Activated CD4-positive, alpha-beta memory T cell treated with anti-CD3 and anti-CD28 coated beads, Interleukin-2, amount 10 ng/mL, durations not matched to agents 7 days and 5 days (primary cell): ENCODE measurements at regions of chr9 and their contacts with region 1.

Region 1: DNA sequence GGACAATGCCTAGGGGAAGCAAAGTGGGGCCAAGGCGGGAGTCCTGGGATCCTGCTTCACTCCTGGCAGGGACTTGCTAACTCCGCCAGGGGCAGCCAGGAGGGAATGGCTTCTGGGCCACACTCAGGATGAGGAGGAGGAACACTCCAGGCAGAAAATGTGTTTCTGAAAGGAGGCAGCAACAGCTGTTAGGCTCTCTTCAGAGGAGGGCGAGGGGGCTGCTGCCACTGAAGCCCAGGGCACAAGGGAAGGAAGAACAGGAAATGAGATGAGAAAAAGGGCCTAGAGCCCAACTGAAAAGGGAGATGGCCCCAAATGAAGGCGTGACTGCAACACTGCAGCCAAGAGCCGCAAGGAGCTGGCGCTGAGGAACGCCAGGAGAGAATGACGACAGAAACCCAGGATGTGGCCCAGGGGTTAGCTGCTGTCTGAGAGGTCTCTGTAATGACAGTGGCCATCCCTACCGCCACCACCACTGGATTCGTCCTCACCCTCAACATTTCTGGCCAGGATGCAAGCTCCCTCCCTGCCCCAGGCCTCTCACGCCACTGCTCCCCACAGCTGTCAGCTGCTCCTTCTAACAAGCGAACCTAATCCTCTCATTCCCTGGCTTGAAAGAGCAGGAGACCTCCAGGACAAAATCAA is 15.8 kb downstream of the PSMB7 start:
- DNase-seq: no peak
- H3K4me3 Mint-ChIP-seq: no peak overlapping the region
- H3K27ac Mint-ChIP-seq: no peak overlapping the region
- H3K4me1 Mint-ChIP-seq: peaks cover 16% of the 10 kb centered on the region
- H3K27me3 Mint-ChIP-seq: no peaks in the 10 kb centered on the region

Region 2: DNA sequence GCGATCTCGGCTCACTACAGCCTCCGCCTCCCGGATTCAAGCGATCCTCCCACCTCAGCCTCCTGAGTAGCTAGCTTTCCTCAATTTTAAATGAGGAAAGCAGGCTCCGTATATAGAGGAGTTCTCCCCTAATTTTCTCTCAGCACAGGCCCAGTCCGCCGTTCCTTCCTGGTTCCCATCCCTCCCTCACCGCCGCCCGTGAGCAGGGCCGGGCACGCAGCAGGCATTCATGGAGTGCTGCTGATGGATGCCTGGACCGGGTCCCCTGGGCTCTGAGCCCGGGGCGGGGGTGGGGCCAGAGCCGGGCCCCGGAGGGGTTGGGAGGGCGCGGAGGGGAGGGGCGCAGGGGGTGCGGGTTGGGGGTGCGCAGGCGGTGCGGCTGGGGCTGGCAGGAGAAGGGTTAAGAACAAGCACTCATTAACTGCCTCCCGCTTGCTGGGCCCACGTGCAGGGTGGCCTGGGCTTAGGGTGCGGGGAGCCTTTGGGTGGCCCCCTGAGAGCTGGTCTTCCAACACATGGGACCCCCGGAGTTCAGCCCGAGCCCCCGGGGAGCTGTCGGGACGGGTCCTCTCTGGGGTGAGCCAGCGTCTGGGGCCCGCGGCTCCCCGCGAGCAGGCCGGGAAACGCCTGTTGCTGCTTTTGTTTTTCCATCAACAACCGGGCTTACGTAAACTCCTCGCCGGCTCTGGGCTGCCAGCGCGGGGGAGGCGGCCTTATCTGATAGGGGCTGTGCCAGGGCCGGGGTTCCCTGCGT is 354.2 kb before region 1 on chr9:
- CTCF ChIA-PET with region 1: no interaction called
- POLR2A ChIA-PET with region 1: no interaction called
- DNase-seq: no peak
- H3K4me3 Mint-ChIP-seq: no peak overlapping the region
- H3K27ac Mint-ChIP-seq: no peak overlapping the region
- H3K4me1 Mint-ChIP-seq: peaks cover 8% of the 10 kb centered on the region
- H3K27me3 Mint-ChIP-seq: peaks cover 50% of the 10 kb centered on the region

Region 3: DNA sequence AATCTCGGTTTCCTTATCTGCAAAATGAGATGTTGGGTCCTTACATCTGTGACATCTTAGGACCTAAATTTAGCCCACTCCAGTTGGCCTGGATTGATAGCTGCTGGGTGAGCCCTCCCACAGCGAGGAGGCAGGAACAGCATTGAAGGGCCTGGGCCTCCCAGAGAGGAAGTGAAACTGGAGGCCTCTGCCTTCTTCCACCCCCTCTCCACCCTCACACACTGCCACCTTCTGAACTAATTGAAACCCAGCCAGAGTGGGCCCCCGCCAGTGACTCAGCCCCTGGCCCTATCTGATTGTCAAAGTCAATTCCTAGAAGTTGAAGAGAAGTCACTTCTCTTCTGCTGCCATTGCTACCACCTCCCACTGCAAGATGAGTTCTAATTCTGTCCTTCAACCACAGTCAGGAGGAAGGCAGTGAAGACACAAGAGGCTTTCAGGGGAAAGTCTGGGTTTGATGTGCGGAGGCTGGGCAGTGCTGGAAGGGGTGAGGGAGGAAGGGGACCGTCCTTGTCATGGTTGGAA is 196.9 kb before region 1 on chr9:
- CTCF ChIA-PET with region 1: no interaction called
- POLR2A ChIA-PET with region 1: no interaction called
- DNase-seq: peak; percentile 91
- H3K4me3 Mint-ChIP-seq: peak overlapping the region; percentile 67
- H3K27ac Mint-ChIP-seq: peak overlapping the region; percentile 96
- H3K4me1 Mint-ChIP-seq: peaks cover 78% of the 10 kb centered on the region
- H3K27me3 Mint-ChIP-seq: no peaks in the 10 kb centered on the region

Region 4: GRCh38 chr9:124267271-124267807 is 132.1 kb before region 1 on chr9:
- CTCF ChIA-PET with region 1: no interaction called
- POLR2A ChIA-PET with region 1: no interaction called
- DNase-seq: no peak
- H3K4me3 Mint-ChIP-seq: no peak overlapping the region
- H3K27ac Mint-ChIP-seq: no peak overlapping the region
- H3K4me1 Mint-ChIP-seq: peaks cover 17% of the 10 kb centered on the region
- H3K27me3 Mint-ChIP-seq: no peaks in the 10 kb centered on the region

Region 5: GRCh38 chr9:124415102-124415851 is 15.8 kb after region 1 on chr9 and contains the start of gene PSMB7:
- CTCF ChIA-PET with region 1: interaction called, 15 read pairs
- POLR2A ChIA-PET with region 1: interaction called, 4 read pairs
- DNase-seq: peak; percentile 98
- H3K4me3 Mint-ChIP-seq: peak within 1 kb of the TSS; percentile 95
- H3K27ac Mint-ChIP-seq: peak within 1 kb of the TSS; percentile 82
- H3K4me1 Mint-ChIP-seq: peaks cover 49% of the 10 kb centered on the region
- H3K27me3 Mint-ChIP-seq: no peaks in the 10 kb centered on the region
- total RNA-seq, gene PSMB7: 113 to 120 TPM